Psoas muscle (tissue), 8 donors: ENCODE measurements at regions of chr4 and their contacts with region 1.

Region 1: DNA sequence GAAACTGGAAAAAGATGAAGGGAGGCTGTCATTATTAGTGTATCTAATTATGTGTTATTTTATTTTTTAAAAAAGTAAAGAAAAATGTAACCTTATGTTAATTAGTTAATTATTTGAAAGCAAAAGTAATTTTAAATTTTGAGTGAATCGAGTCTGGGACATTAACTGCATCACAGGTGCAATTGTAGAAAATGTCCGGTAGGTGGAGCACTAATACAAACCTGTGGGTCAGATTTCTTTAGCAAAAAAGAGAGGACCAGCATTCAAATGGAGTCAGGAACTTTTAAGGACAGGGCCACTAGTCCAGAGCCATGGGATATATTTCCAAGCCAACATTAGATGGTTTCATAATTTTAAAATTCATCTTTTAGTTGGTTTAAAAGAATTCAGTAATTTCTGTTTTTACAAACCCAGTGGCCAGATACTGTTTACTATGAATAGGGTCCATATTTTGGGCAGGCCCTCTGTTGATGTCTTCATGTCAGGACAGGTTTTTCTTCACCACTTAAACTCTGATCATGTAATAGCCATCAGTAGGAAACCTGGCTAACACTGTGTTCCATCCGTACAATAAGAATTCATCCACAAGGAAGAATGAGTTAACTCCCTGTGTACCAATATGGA is 27.2 kb downstream of the BST1 start:
- DNase-seq: no peak
- ATAC-seq: peak; percentile 58 to 83 (median 70)
- H3K4me3 ChIP-seq: no peak overlapping the region
- H3K27ac ChIP-seq: no peak overlapping the region
- H3K4me1 ChIP-seq: no peaks in the 10 kb centered on the region
- H3K27me3 ChIP-seq: no peaks in the 10 kb centered on the region
- CTCF ChIP-seq: peak; percentile 85

Region 2: DNA sequence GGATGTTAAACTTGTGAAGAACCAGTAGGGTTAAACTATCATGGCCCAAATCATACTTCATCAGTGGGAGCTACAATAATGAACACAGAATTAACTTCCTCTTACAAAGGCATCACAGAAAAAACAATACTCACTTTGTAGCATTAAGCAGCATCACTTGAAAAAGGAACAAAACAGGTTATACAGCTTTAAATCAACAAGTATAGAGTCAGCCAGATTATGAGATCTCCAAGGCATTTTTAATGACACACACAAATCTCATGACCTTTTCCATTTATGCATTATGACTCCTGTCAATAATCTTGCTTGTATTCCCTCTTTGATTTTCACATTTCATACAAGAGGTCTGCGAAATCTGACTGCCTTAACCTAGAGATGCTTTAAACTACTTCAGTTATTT is 93.2 kb before region 1 on chr4:
- intact Hi-C with region 1: no loop called
- DNase-seq: no peak
- ATAC-seq: no peak
- H3K4me3 ChIP-seq: no peak overlapping the region
- H3K27ac ChIP-seq: no peak overlapping the region
- H3K4me1 ChIP-seq: no peaks in the 10 kb centered on the region
- H3K27me3 ChIP-seq: no peaks in the 10 kb centered on the region
- CTCF ChIP-seq: no peak

Region 3: GRCh38 chr4:15873117-15873516 is 143.1 kb after region 1 on chr4:
- intact Hi-C with region 1: loop called in 1 of 2 experiments (anchors 10 kb)
- DNase-seq: no peak
- ATAC-seq: peak in 1 of 4 donors; percentile 39
- H3K4me3 ChIP-seq: no peak overlapping the region
- H3K27ac ChIP-seq: no peak overlapping the region
- H3K4me1 ChIP-seq: peaks cover 5% of the 10 kb centered on the region
- H3K27me3 ChIP-seq: no peaks in the 10 kb centered on the region
- CTCF ChIP-seq: no peak

Region 4: GRCh38 chr4:15956179-15956850 is 226.3 kb after region 1 on chr4:
- intact Hi-C with region 1: loop called (anchors 2 to 5 kb)
- DNase-seq: peak; percentile 72 to 83
- ATAC-seq: peak; percentile 92 to 99 (median 96)
- H3K4me3 ChIP-seq: no peak overlapping the region
- H3K27ac ChIP-seq: no peak overlapping the region
- H3K4me1 ChIP-seq: peaks cover 2% of the 10 kb centered on the region
- H3K27me3 ChIP-seq: no peaks in the 10 kb centered on the region
- CTCF ChIP-seq: peak; percentile 90

Region 5: GRCh38 chr4:16001484-16001858 is 271.4 kb after region 1 on chr4:
- intact Hi-C with region 1: loop called (anchors 5 kb)
- DNase-seq: peak in 1 of 2 donors; percentile 29
- ATAC-seq: peak; percentile 91 to 100 (median 96)
- H3K4me3 ChIP-seq: no peak overlapping the region
- H3K27ac ChIP-seq: no peak overlapping the region
- H3K4me1 ChIP-seq: peaks cover 3% of the 10 kb centered on the region
- H3K27me3 ChIP-seq: no peaks in the 10 kb centered on the region
- CTCF ChIP-seq: peak; percentile 85